ENCODE measurements at regions of chr11 and their contacts with region 1.

Region 1: GRCh38 chr11:113942256-113942655 is 32.7 kb upstream of the HTR3A start:
- DNase-seq: no peak
- ATAC-seq: no peak
- H3K4me3 ChIP-seq: no peak overlapping the region
- H3K27ac ChIP-seq: no peak overlapping the region
- H3K4me1 ChIP-seq: no peaks in the 10 kb centered on the region
- H3K27me3 ChIP-seq: no peaks in the 10 kb centered on the region
- CTCF ChIP-seq: no peak

Region 2: GRCh38 chr11:113465786-113466185 is 476.5 kb before region 1 on chr11:
- intact Hi-C with region 1: loop called in 1 of 2 experiments (anchors 5 kb)
- DNase-seq: no peak
- ATAC-seq: no peak
- H3K4me3 ChIP-seq: no peak overlapping the region
- H3K27ac ChIP-seq: no peak overlapping the region
- H3K4me1 ChIP-seq: no peaks in the 10 kb centered on the region
- H3K27me3 ChIP-seq: peaks cover 0 to 3% (median 2%) of the 10 kb centered on the region in 3 donors
- CTCF ChIP-seq: no peak

Region 3: GRCh38 chr11:114180301-114181055 is 238.2 kb after region 1 on chr11:
- intact Hi-C with region 1: no loop called
- DNase-seq: peak; percentile 30 to 75
- ATAC-seq: peak; percentile 31 to 66 (median 36)
- H3K4me3 ChIP-seq: peak overlapping the region; percentile 42
- H3K27ac ChIP-seq: peak overlapping the region; percentile 99
- H3K4me1 ChIP-seq: peaks cover 95% of the 10 kb centered on the region
- H3K27me3 ChIP-seq: no peaks in the 10 kb centered on the region
- CTCF ChIP-seq: peak; percentile 72

Region 4: DNA sequence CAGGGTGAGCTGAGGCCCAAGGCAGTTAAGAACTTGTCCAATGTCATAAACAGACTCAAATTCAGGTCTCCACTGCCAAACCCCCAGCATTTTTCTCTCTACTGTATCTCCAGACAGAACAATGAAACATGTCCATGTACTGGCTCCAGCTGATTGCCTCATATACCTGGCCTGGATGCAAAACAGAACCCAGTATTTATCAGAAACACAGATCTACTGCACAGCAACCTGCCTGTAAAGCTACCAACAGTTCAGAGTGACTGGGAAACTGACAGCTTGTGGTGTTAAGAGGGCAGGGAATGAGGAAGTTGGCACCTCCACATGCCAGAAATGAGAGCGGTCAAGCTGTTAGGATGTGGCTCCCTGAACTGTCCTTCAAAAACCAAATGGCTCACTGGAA is 416.5 kb after region 1 on chr11:
- intact Hi-C with region 1: no loop called
- DNase-seq: no peak
- ATAC-seq: no peak
- H3K4me3 ChIP-seq: no peak overlapping the region
- H3K27ac ChIP-seq: no peak overlapping the region
- H3K4me1 ChIP-seq: no peaks in the 10 kb centered on the region
- H3K27me3 ChIP-seq: no peaks in the 10 kb centered on the region
- CTCF ChIP-seq: no peak

Measured in psoas muscle (tissue), 8 donors.